ENCODE measurements at regions of chr17 and their contacts with region 1.

Region 1: DNA sequence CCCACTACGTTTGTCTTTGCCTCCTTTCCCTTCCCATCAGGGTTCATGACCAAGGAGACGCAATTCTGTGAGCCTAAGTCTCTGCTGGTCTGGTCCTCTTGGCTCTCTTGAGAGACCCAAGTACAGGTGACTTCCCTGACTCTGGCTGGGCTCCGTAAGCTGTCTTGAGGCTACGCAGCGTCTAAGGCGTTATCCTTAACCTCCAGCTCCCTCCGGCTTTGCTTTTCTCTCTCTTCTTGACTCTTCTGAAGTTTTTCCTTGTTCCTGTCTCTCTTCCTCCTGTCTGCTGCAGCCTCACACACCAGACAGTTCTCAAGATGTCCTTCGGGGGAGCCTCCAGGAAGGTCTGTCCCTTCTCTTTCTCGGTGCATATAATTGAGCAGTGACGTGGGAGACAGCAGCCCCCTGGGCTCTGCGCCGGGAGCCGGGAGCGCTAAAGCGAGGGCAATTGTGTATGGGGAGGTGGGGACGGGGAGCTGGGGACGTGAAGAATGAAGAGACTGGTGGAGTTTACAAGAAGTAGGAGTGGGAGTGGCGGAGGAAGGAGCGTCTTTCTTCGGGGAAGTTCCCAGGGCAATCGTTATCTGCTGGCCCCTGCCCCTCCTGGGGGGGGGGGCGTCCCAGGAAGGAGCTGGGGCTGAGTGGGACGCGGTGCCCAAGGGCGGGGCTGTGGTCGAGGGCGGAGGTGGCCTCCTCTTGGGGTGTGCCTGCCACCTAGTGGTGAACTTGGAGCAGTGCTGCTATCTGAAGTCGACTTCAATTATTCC is 6.9 kb upstream of the PIRT start:
- DNase-seq: peak; percentile 81
- ATAC-seq: peak; percentile 90 to 97

Region 2: DNA sequence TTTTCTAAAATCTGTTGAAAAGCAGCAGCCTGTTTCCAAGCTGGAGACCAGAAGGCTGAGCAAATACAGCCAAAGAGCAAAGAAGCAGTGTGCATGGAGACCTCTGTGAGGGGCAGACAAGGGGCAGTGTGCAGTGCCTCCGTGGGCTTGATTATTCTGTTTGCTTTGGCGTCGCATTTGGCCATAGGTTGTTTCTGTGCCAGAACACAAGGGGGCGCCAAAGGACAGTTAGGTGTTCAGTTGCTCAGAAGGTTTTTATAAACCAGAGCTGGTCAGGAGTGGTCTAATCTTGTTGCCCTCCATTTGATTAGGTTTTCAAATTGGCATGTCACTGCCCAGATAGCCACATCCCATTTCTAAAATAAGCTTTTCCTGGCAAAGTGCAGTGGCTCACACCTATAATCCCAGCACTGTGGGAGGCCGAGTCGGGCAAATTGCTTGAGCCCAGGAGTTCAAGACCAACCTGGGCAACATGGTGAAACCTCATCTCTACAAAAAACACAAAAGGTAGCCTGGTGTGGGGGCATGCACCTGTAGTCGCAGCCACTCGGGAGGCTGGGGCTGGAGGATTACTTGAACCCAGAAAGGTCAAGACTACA is 198.3 kb before region 1 on chr17:
- intact Hi-C with region 1: loop called (anchors 1 to 10 kb)
- DNase-seq: peak; percentile 65
- ATAC-seq: peak; percentile 65 to 72

Region 3: DNA sequence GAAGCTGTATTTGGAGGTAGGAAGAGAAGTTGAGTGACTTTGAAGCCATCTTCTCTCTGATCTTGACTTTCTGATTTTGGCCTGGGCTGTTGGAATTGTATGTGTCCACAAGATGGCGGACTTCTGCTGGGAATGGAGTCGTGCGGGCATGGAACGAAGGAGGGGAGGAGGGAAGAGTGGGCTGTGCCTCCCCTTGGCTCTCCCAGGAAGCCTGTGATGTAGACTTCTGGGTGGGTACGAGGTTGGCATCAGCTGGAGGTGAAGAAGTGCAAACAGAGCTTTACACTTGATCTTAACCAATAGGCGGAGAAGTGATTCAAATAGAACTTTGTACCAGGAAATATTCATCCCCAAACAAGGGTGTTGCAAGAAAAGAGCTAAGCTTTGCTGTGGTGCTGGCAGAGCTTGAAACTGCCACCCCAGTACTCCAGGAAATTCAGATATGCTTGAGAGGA is 107.6 kb before region 1 on chr17:
- intact Hi-C with region 1: loop called (anchors 1 to 2 kb)
- DNase-seq: peak; percentile 58
- ATAC-seq: peak; percentile 89 to 96

Region 4: DNA sequence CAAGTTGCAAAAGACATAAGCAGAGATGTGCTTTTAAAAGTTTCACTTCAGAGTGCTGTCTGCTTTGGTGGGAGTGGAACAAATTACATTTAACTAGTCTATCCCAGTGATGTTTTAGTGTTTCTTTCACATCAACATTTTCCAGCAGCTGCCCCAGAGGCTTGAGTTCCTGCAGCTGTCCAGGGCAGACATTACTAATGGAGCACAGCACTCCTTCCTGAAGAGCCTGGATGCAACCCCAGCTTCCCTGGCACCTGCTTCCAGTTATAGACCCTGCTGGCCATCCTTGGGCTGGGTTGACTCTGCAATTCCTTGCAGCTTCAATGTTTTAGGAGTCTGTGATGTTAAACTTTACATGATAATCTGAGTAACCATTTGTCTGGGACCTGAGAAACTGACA is 54.5 kb after region 1 on chr17:
- intact Hi-C with region 1: no loop called
- DNase-seq: no peak
- ATAC-seq: no peak

Measured in left cardiac atrium (tissue), 4 donors.